CD4-positive, alpha-beta T cell (primary cell): ENCODE measurements at regions of chr3 and their contacts with region 1.

Region 1: GRCh38 chr3:119219069-119219468 is 21.6 kb downstream of the B4GALT4 start:
- DNase-seq: peak in 9 of 14 experiments; percentile 14 to 71 (median 37)
- ATAC-seq: peak; percentile 99
- H3K4me3 ChIP-seq: no peak overlapping the region
- H3K4me3 Mint-ChIP-seq: peak overlapping the region; percentile 71
- H3K27ac ChIP-seq: peak overlapping the region; percentile 41 to 44
- H3K27ac Mint-ChIP-seq: peak overlapping the region; percentile 93
- H3K4me1 ChIP-seq: peaks cover 26% of the 10 kb centered on the region
- H3K4me1 Mint-ChIP-seq: peaks cover 68% of the 10 kb centered on the region
- H3K27me3 ChIP-seq: no peaks in the 10 kb centered on the region
- H3K27me3 Mint-ChIP-seq: no peaks in the 10 kb centered on the region
- CTCF ChIP-seq: no peak

Region 2: GRCh38 chr3:118955914-118956556 is 263.0 kb before region 1 on chr3:
- CTCF ChIA-PET with region 1: no interaction called
- POLR2A ChIA-PET with region 1: no interaction called
- intact Hi-C with region 1: loop called in 1 of 2 experiments (anchors 10 kb)
- DNase-seq: peak in 3 of 14 experiments; percentile 52 to 63 (median 62)
- ATAC-seq: peak; percentile 85
- H3K4me3 ChIP-seq: no peak overlapping the region
- H3K4me3 Mint-ChIP-seq: peak overlapping the region; percentile 16
- H3K27ac ChIP-seq: peak overlapping the region in 1 of 2 donors; percentile 4
- H3K27ac Mint-ChIP-seq: peak overlapping the region; percentile 79
- H3K4me1 ChIP-seq: peaks cover 26% of the 10 kb centered on the region
- H3K4me1 Mint-ChIP-seq: peaks cover 55% of the 10 kb centered on the region
- H3K27me3 ChIP-seq: no peaks in the 10 kb centered on the region
- H3K27me3 Mint-ChIP-seq: no peaks in the 10 kb centered on the region
- CTCF ChIP-seq: no peak

Region 3: GRCh38 chr3:119206611-119207511 is 12.2 kb before region 1 on chr3:
- CTCF ChIA-PET with region 1: no interaction called
- POLR2A ChIA-PET with region 1: interaction called, 21 read pairs
- intact Hi-C with region 1: no loop called
- DNase-seq: peak in 4 of 14 experiments; percentile 20 to 40 (median 30)
- ATAC-seq: peak; percentile 76
- H3K4me3 ChIP-seq: no peak overlapping the region
- H3K4me3 Mint-ChIP-seq: peak overlapping the region; percentile 56
- H3K27ac ChIP-seq: peak overlapping the region; percentile 26 to 36
- H3K27ac Mint-ChIP-seq: peak overlapping the region; percentile 80
- H3K4me1 ChIP-seq: peaks cover 37% of the 10 kb centered on the region
- H3K4me1 Mint-ChIP-seq: peaks cover 87% of the 10 kb centered on the region
- H3K27me3 ChIP-seq: no peaks in the 10 kb centered on the region
- H3K27me3 Mint-ChIP-seq: no peaks in the 10 kb centered on the region
- CTCF ChIP-seq: no peak